ENCODE measurements at regions of chr10 and their contacts with region 1.

Region 1: GRCh38 chr10:28991326-28992270 is 297.3 kb upstream of the LYZL1 start:
- DNase-seq: peak; percentile 41
- H3K4me3 ChIP-seq: no peak overlapping the region
- H3K27ac ChIP-seq: no peak overlapping the region
- H3K4me1 ChIP-seq: no peaks in the 10 kb centered on the region
- CTCF ChIP-seq: peak; percentile 86

Region 2: GRCh38 chr10:28663576-28664313 is 327.9 kb before region 1 on chr10:
- CTCF ChIA-PET with region 1: interaction called, 3 read pairs
- POLR2A ChIA-PET with region 1: no interaction called
- intact Hi-C with region 1: loop called (anchors 1 kb)
- DNase-seq: peak; percentile 78
- H3K4me3 ChIP-seq: no peak overlapping the region
- H3K27ac ChIP-seq: no peak overlapping the region
- H3K4me1 ChIP-seq: no peaks in the 10 kb centered on the region
- CTCF ChIP-seq: peak; percentile 99

Measured in OCI-LY7 (cell line).